IMR-90 (cell line): ENCODE measurements at regions of chr5 and their contacts with region 1.

Region 1: DNA sequence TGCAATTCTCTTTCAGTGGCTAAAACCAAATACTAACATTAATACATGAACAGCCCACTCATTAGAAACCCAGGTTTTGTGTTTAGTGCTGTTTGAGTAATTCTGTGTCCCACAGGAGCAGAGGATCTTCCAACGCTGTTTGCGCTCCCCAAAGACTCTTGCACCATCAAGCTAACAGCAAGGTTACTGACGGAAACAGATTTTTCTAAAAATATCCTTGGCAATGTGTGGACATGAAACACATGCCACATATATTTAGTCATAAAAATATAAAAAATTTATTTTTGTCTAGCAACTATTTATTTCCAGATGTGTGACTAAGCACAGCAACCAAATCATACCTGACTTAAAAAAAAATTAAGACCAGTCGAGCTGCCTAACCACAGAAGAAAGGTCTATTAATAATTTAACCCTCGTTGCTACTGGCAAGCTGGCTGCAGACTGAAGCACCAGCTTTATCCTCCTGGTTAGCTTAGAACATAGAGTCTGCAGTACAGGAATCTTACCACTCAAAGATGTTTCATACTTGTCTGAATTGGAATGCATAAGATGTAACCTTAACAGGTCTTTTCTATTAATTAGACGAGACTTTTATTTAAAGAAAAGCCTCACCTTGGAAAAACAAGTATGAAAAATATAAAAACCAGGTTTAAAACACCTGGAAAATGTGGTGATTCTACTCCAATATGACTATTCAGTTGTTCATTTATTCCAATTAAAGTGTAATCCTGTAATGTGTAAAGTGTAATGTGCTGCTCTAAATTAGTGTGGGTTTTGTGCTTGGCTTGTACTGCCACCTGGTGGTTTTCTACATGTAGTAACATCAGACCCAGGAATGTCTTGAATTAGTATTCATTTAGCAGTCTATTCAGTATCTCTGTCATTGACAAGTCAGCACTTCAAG is 272.5 kb downstream of the EPB41L4A start:
- DNase-seq: peak; percentile 93
- ATAC-seq: peak; percentile 96
- H3K4me3 ChIP-seq: no peak overlapping the region
- H3K27ac ChIP-seq: peak overlapping the region; percentile 68; the same call in 1 of the 2 replicates
- H3K4me1 ChIP-seq: peaks cover 3% of the 10 kb centered on the region; the same call in 1 of the 2 replicates
- H3K27me3 ChIP-seq: no peaks in the 10 kb centered on the region
- CTCF ChIP-seq: peak; percentile 87
- POLR2A ChIP-seq: no peak
- RAD21 ChIP-seq: peak; percentile 96

Region 2: GRCh38 chr5:111530298-111530740 is 616.3 kb before region 1 on chr5:
- CTCF ChIA-PET with region 1: interaction called, 3 read pairs
- POLR2A ChIA-PET with region 1: no interaction called
- dilution Hi-C with region 1: no loop called
- in situ Hi-C with region 1: no loop called
- intact Hi-C with region 1: loop called (anchors 5 kb)
- DNase-seq: peak; percentile 41
- ATAC-seq: no peak
- H3K4me3 ChIP-seq: no peak overlapping the region
- H3K27ac ChIP-seq: no peak overlapping the region
- H3K4me1 ChIP-seq: peaks cover 1% of the 10 kb centered on the region; the same call in 1 of the 2 replicates
- H3K27me3 ChIP-seq: no peaks in the 10 kb centered on the region
- CTCF ChIP-seq: no peak
- POLR2A ChIP-seq: no peak
- RAD21 ChIP-seq: no peak

Region 3: DNA sequence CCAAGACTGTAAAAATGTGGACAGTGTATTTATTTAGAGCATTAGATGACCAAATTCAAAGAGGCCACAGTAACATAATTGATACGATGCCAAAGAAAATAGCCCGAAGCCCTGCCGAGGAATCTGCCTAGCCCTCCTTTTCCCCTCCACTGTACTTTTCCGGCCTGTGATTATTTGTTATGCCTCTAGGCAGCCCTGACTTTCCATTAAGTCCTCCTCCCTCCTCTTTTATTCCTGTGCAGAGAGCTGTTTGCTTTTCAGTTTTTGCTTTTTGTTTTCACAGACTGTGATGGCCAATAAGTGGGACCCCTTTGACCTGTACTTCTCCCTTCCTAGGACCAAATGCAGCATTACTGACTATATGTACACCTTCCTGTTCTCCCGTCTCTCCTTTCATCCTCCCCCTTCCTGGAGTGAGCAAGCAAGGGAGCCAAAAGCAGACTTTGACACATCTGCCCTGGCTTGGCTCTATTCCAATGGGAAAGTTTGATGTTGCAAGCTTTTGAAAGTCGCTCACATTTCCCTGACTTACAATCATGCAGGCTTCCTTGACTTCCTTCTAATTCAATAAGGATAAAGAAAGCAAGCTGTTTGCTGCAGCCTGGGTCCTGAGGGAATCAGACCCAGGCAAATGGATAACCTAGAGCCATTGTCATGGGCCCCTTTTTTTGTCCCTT is 465.7 kb before region 1 on chr5:
- CTCF ChIA-PET with region 1: no interaction called
- POLR2A ChIA-PET with region 1: no interaction called
- dilution Hi-C with region 1: no loop called
- in situ Hi-C with region 1: no loop called
- intact Hi-C with region 1: loop called (anchors 5 kb)
- DNase-seq: peak; percentile 97
- ATAC-seq: peak; percentile 82
- H3K4me3 ChIP-seq: no peak overlapping the region
- H3K27ac ChIP-seq: peak overlapping the region; percentile 68; the same call in 1 of the 2 replicates
- H3K4me1 ChIP-seq: peaks cover 17% of the 10 kb centered on the region
- H3K27me3 ChIP-seq: no peaks in the 10 kb centered on the region
- CTCF ChIP-seq: no peak
- POLR2A ChIP-seq: no peak
- RAD21 ChIP-seq: no peak

Region 4: GRCh38 chr5:111762895-111763294 is 383.7 kb before region 1 on chr5:
- CTCF ChIA-PET with region 1: no interaction called
- POLR2A ChIA-PET with region 1: no interaction called
- dilution Hi-C with region 1: no loop called
- in situ Hi-C with region 1: loop called (anchors 10 kb)
- intact Hi-C with region 1: no loop called
- DNase-seq: peak; percentile 87
- ATAC-seq: peak; percentile 12; the same call in 1 of the 2 replicates
- H3K4me3 ChIP-seq: no peak overlapping the region
- H3K27ac ChIP-seq: no peak overlapping the region; the same call in 1 of the 2 replicates
- H3K4me1 ChIP-seq: peaks cover 8% of the 10 kb centered on the region
- H3K27me3 ChIP-seq: no peaks in the 10 kb centered on the region
- CTCF ChIP-seq: no peak
- POLR2A ChIP-seq: no peak
- RAD21 ChIP-seq: no peak

Region 5: GRCh38 chr5:111997711-111998110 is 148.9 kb before region 1 on chr5:
- CTCF ChIA-PET with region 1: no interaction called
- POLR2A ChIA-PET with region 1: no interaction called
- dilution Hi-C with region 1: no loop called
- in situ Hi-C with region 1: loop called (anchors 10 kb)
- intact Hi-C with region 1: loop called (anchors 2 kb)
- DNase-seq: peak; percentile 100
- ATAC-seq: peak; percentile 87
- H3K4me3 ChIP-seq: no peak overlapping the region
- H3K27ac ChIP-seq: no peak overlapping the region
- H3K4me1 ChIP-seq: peaks cover 15% of the 10 kb centered on the region
- H3K27me3 ChIP-seq: no peaks in the 10 kb centered on the region
- CTCF ChIP-seq: no peak
- POLR2A ChIP-seq: no peak
- RAD21 ChIP-seq: 0 out of 2 replicates have a peak, but pooled peaks have one; percentile 7

Region 6: DNA sequence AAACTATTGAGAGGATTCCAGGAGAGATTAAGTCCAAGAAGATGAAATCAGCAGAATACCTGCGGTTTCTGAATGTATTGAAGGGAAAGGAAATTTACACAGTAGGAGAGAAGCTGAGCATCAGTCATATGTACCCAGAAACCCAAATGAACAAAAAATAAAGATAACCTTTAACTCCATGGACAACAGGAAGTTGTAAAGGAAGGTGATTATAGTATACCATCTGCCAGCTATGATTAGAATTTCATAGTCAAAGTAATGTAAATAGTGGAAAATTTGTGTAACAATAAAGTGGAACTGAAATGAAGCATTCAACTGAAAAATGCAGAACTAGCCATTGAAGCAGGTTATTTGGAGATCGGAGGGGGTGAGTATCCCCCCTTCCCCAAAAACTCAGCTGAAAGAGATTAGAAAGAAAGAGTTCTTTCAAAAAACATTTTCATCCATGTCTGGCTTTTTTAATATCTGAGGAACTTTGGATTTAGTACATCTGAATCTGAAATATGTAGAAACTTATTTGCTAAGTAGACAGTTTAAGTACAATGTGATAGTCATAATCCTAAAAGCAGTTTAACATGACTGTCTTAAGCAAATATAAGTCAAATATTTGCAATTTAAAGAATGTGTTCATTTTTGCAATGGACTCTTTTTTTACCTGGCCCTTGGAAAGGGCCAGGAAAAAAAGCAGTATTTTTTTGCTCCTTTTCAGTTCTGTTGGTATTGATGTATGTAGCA is 649.5 kb after region 1 on chr5:
- CTCF ChIA-PET with region 1: no interaction called
- POLR2A ChIA-PET with region 1: no interaction called
- dilution Hi-C with region 1: no loop called
- in situ Hi-C with region 1: no loop called
- intact Hi-C with region 1: no loop called
- DNase-seq: no peak
- ATAC-seq: peak; percentile 53
- H3K4me3 ChIP-seq: no peak overlapping the region
- H3K27ac ChIP-seq: no peak overlapping the region
- H3K4me1 ChIP-seq: peaks cover 1% of the 10 kb centered on the region; the same call in 1 of the 2 replicates
- H3K27me3 ChIP-seq: no peaks in the 10 kb centered on the region
- CTCF ChIP-seq: no peak
- POLR2A ChIP-seq: no peak
- RAD21 ChIP-seq: no peak